Gastrocnemius medialis (tissue), 4 donors: ENCODE measurements at regions of chr19 and their contacts with region 1.

Region 1: GRCh38 chr19:3544742-3545668 is 6.0 kb downstream of the TEKTIP1 start:
- DNase-seq: peak; percentile 39 to 65
- ATAC-seq: peak; percentile 66 to 85
- H3K4me3 ChIP-seq: no peak overlapping the region
- H3K27ac ChIP-seq: no peak overlapping the region
- H3K4me1 ChIP-seq: no peaks in the 10 kb centered on the region
- H3K27me3 ChIP-seq: no peaks in the 10 kb centered on the region
- CTCF ChIP-seq: peak; percentile 86 to 96 (median 95)
- POLR2A ChIP-seq: no peak

Region 2: GRCh38 chr19:3580156-3580934 is 35.3 kb after region 1 on chr19:
- in situ Hi-C with region 1: no loop called
- intact Hi-C with region 1: loop called (anchors 5 kb)
- DNase-seq: no peak
- ATAC-seq: peak; percentile 37 to 74
- H3K4me3 ChIP-seq: no peak overlapping the region
- H3K27ac ChIP-seq: peak overlapping the region in 1 of 4 donors; percentile 22
- H3K4me1 ChIP-seq: peaks cover 6 to 11% of the 10 kb centered on the region in 2 donors
- H3K27me3 ChIP-seq: peaks cover 3 to 6% (median 4%) of the 10 kb centered on the region in 3 donors
- CTCF ChIP-seq: no peak
- POLR2A ChIP-seq: no peak